ENCODE measurements at regions of chr4 and their contacts with region 1.

Region 1: GRCh38 chr4:88818631-88819470 is 121.2 kb upstream of the NAP1L5 start:
- DNase-seq: peak; percentile 10 to 66
- ATAC-seq: peak; percentile 27 to 54; a peak in 3 of 6 replicates
- H3K4me3 ChIP-seq: no peak overlapping the region
- H3K27ac ChIP-seq: no peak overlapping the region
- H3K4me1 ChIP-seq: peaks cover 20% of the 10 kb centered on the region; the same call in 2 of the 3 replicates
- CTCF ChIP-seq: peak; percentile 69
- EP300 ChIP-seq: no peak
- POLR2A ChIP-seq: no peak
- RAD21 ChIP-seq: peak; percentile 84 to 89

Region 2: GRCh38 chr4:88533088-88533790 is 285.6 kb before region 1 on chr4:
- CTCF ChIA-PET with region 1: no interaction called
- POLR2A ChIA-PET with region 1: no interaction called
- DNase-seq: no peak
- ATAC-seq: no peak
- H3K4me3 ChIP-seq: no peak overlapping the region
- H3K27ac ChIP-seq: no peak overlapping the region
- H3K4me1 ChIP-seq: no peaks in the 10 kb centered on the region
- CTCF ChIP-seq: no peak
- EP300 ChIP-seq: no peak
- POLR2A ChIP-seq: no peak
- RAD21 ChIP-seq: no peak

Region 3: DNA sequence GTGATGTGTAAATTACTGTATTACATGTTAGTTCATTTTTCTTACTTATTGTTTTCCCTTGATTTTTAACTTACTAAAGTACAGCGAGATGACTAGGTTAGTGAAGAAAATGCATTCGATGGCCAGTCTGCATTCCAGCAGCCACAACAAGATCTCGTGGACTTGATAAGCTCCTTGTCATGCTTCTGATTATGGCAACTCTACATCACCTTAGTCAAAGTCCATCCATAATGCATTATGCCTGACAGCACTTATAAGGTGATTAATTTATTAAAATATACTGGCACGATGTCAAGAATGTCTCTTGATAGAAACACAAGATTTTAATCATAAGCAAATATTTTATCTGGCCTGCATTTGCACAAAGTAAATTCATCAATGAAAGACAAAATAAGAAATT is 11.4 kb before region 1 on chr4:
- CTCF ChIA-PET with region 1: interaction called, 11 read pairs
- POLR2A ChIA-PET with region 1: no interaction called
- DNase-seq: no peak
- ATAC-seq: no peak
- H3K4me3 ChIP-seq: no peak overlapping the region
- H3K27ac ChIP-seq: no peak overlapping the region
- H3K4me1 ChIP-seq: peaks cover 19% of the 10 kb centered on the region
- CTCF ChIP-seq: no peak
- EP300 ChIP-seq: no peak
- POLR2A ChIP-seq: no peak
- RAD21 ChIP-seq: no peak

Region 4: DNA sequence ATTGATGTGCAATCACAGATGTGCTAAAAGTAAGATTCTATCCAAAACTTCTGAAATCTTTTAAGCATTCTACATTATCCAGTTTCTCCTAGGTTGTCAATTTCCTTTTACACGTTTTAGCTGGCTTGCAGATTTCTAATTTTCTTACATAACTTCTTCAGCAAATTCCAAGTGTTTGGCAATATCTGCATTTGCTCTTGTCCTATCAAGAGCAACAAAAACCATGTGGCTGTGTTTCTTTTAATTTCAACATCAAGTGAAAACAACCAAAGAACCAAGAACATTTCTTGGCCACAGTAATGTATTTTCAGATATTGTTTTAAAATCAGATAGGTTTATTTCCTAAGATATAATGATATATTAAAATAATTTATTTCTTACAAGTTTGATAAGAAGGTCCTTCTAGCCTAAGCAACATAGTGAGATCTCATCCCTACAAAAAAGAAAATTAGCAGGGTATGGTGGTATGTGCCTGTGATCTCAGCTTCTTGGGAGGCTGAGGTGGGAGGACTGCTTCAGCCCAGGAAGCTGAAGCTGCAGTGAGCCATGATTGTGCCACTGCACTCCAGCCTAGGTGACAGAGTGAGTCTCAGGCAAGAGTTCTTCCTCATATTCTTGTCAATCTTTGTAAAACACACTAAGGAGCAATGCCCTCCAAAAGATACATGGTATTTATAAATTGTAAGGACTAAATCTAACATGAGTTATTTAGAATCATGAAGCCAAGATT is 10.2 kb after region 1 on chr4:
- CTCF ChIA-PET with region 1: interaction called, 10 read pairs
- POLR2A ChIA-PET with region 1: no interaction called
- DNase-seq: no peak
- ATAC-seq: no peak
- H3K4me3 ChIP-seq: no peak overlapping the region
- H3K27ac ChIP-seq: no peak overlapping the region
- H3K4me1 ChIP-seq: peaks cover 3% of the 10 kb centered on the region; the same call in 2 of the 3 replicates
- CTCF ChIP-seq: no peak
- EP300 ChIP-seq: no peak
- POLR2A ChIP-seq: no peak
- RAD21 ChIP-seq: no peak

Region 5: DNA sequence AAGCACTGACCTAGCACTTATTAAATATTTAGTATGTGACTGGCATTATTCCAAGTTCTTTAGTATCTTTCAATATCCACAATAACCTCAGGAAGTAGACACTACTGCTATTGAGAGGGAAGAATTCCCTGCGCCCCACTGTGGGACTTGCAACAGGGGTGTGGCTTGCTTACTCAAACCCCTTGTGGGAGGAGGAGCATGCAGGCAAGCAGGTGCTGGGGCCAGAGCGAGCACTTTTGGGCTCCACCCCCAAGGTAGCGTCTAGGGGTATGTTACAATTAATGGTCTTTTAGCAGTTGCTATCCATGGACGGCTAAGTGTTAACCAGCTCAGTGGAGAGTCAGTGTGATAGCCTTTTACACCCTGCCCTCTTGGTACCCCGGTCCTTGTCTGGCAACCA is 187.5 kb after region 1 on chr4:
- CTCF ChIA-PET with region 1: interaction called, 11 read pairs
- POLR2A ChIA-PET with region 1: no interaction called
- DNase-seq: no peak
- ATAC-seq: no peak
- H3K4me3 ChIP-seq: no peak overlapping the region
- H3K27ac ChIP-seq: no peak overlapping the region
- H3K4me1 ChIP-seq: peaks cover 20% of the 10 kb centered on the region; the same call in 2 of the 3 replicates
- CTCF ChIP-seq: no peak
- EP300 ChIP-seq: no peak
- POLR2A ChIP-seq: no peak
- RAD21 ChIP-seq: no peak

Region 6: GRCh38 chr4:89024051-89024675 is 205.3 kb after region 1 on chr4:
- CTCF ChIA-PET with region 1: interaction called, 112 read pairs
- POLR2A ChIA-PET with region 1: no interaction called
- DNase-seq: peak; percentile 30 to 70
- ATAC-seq: peak; percentile 92 to 95
- H3K4me3 ChIP-seq: no peak overlapping the region
- H3K27ac ChIP-seq: no peak overlapping the region; a peak in 1 of 6 replicates
- H3K4me1 ChIP-seq: no peaks in the 10 kb centered on the region; the same call in 2 of the 3 replicates
- CTCF ChIP-seq: peak; percentile 81
- EP300 ChIP-seq: no peak
- POLR2A ChIP-seq: no peak
- RAD21 ChIP-seq: peak; percentile 87 to 90

Measured in A549 (cell line).